ENCODE measurements at regions of chr2 and their contacts with region 1.

Region 1: DNA sequence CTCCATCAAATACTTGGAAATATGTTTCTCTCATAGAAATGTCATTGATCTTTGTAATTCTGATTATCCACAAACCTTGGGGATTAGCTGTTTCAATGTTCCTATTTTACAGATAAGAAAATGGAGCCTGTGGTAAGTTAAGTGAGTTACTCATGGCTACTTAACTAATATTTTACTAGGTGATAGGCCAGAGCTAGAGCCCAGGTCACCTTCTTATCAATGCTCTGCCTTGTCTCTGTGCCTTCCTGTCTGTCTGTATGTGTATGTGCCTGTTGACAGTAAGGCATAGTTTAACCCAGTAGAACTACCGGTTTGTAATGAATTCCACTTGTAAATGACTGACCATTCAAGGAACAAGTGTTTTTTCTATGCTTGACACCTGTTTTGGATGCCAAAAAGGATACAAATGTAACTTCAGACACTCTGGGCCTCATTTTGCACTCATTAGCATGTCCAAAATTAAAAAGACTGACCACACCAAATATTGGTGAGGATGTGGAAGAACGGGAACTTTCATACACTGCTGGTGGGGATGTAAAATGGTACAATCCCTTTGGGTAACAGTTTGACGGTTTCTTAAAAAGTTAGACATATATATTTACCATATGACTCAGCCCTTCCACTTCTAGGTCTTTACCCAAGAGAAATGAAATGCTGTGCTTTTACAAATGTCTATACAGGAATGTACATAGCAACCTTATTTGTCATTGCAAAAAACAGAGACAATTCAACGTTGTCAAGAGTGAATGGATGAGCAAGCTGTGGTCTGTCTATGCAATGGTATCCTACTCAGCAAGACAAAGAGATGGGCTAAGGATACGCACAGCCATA is 19.6 kb upstream of the IL1A start:
- DNase-seq: peak; percentile 93
- H3K4me3 ChIP-seq: no peak overlapping the region
- H3K27ac ChIP-seq: peak overlapping the region; percentile 99
- H3K4me1 ChIP-seq: peaks cover 36% of the 10 kb centered on the region
- H3K27me3 ChIP-seq: no peaks in the 10 kb centered on the region
- CTCF ChIP-seq: no peak

Region 2: GRCh38 chr2:112772322-112772721 is 31.6 kb before region 1 on chr2:
- CTCF ChIA-PET with region 1: no interaction called
- dilution Hi-C with region 1: loop called (anchors 5 kb)
- in situ Hi-C with region 1: no loop called
- intact Hi-C with region 1: no loop called
- DNase-seq: no peak
- H3K4me3 ChIP-seq: no peak overlapping the region
- H3K27ac ChIP-seq: no peak overlapping the region
- H3K4me1 ChIP-seq: peaks cover 8% of the 10 kb centered on the region
- H3K27me3 ChIP-seq: no peaks in the 10 kb centered on the region
- CTCF ChIP-seq: no peak

Region 3: DNA sequence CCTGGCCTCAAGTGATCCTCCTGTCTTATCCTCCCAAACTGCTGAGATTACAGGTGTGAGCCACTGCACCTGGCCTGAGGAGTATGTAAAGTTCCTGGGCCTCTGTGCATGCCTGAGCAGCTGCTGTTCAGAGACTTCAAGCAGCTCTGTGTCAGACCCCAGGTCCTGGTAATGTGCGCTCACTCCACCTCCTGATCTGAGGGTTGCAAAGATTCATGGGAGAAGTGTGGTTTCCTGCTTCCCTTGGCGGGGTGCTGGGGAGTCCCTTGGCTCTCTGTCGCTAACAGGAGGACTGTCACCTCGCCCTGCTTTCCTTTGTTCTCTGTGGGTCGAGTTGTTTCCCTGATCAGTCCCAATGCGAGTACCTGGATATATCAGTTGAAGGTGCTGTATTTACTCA is 192.7 kb after region 1 on chr2:
- CTCF ChIA-PET with region 1: no interaction called
- dilution Hi-C with region 1: no loop called
- in situ Hi-C with region 1: no loop called
- intact Hi-C with region 1: no loop called
- DNase-seq: no peak
- H3K4me3 ChIP-seq: no peak overlapping the region
- H3K27ac ChIP-seq: no peak overlapping the region
- H3K4me1 ChIP-seq: no peaks in the 10 kb centered on the region
- H3K27me3 ChIP-seq: no peaks in the 10 kb centered on the region
- CTCF ChIP-seq: no peak

Measured in mammary epithelial cell (primary cell).